CD14-positive monocyte (primary cell): ENCODE measurements at regions of chr5 and their contacts with region 1.

Region 1: GRCh38 chr5:127564002-127564769 is 46.7 kb downstream of the PRRC1 start:
- DNase-seq: peak; percentile 29 to 51 (median 51)
- H3K4me3 ChIP-seq: no peak overlapping the region
- H3K4me3 Mint-ChIP-seq: no peak overlapping the region
- H3K27ac ChIP-seq: no peak overlapping the region
- H3K27ac Mint-ChIP-seq: no peak overlapping the region
- H3K4me1 ChIP-seq: peaks cover 0 to 3% of the 10 kb centered on the region in 2 donors
- H3K4me1 Mint-ChIP-seq: peaks cover 25% of the 10 kb centered on the region
- H3K27me3 ChIP-seq: no peaks in the 10 kb centered on the region
- H3K27me3 Mint-ChIP-seq: peaks cover 0 to 1% (median 0%) of the 10 kb centered on the region in 3 donors
- CTCF ChIP-seq: peak; percentile 69

Region 2: DNA sequence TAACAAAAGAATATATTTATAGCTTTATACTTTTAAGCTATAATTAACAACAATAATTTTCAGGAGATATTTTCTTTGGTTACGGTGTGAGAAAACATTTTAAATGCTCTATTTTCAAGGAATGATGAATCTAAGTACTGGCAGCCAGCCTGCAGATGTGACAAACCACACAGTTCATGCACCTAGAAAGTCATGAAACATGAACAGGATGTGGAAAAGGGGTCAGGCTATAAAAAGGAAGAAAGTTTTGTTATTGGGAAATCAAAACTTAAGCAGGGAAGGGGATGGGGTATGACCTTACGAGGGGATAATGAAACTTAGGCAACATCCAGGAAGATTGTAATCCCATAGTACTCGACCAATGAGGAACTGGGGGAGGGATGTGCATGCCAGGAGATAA is 1649.7 kb before region 1 on chr5:
- intact Hi-C with region 1: no loop called
- DNase-seq: no peak
- H3K4me3 ChIP-seq: no peak overlapping the region
- H3K4me3 Mint-ChIP-seq: no peak overlapping the region
- H3K27ac ChIP-seq: no peak overlapping the region
- H3K27ac Mint-ChIP-seq: no peak overlapping the region
- H3K4me1 ChIP-seq: no peaks in the 10 kb centered on the region
- H3K4me1 Mint-ChIP-seq: no peaks in the 10 kb centered on the region
- H3K27me3 ChIP-seq: no peaks in the 10 kb centered on the region
- H3K27me3 Mint-ChIP-seq: no peaks in the 10 kb centered on the region
- CTCF ChIP-seq: no peak

Region 3: DNA sequence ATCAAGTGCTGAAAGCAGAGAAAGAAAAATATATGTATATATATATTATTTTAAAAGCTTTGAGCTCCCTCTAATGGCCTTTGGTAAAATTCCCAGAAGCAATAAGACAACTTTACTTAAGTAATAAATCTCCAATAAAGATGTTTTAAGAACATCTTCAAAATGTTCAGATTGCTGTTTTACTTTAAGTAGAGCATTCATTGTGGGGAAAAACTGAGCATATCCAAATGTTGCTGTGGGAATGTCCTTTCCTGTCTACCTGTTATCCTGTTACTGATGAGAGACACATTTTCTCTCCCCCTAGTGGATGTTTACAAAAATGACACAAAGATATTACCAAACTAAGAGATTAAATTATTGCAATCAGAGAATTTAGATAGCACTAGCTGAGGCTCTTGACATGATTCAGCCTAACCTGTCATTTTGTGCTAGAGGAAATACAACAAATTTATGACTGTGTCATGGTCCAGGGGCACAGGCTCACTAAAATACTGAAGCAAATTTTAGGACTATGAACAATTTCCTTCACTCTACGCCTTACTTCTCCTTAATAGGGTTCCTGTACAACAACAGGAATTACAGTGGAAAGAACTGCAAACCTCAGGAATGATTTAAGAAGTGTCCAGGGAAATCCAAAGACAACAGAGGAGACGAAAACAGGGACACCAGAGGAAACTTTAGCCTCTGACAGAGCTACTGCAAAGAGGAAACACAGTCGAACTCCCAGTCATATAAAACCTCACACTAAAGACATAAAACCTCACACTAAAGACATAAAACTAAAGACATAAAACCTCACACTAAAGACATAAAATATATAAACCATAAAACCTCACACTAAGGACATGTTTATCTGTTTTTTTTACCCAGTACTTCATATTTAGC is 71.1 kb before region 1 on chr5:
- intact Hi-C with region 1: no loop called
- DNase-seq: peak; percentile 2 to 18 (median 12)
- H3K4me3 ChIP-seq: no peak overlapping the region
- H3K4me3 Mint-ChIP-seq: no peak overlapping the region
- H3K27ac ChIP-seq: no peak overlapping the region
- H3K27ac Mint-ChIP-seq: no peak overlapping the region
- H3K4me1 ChIP-seq: no peaks in the 10 kb centered on the region
- H3K4me1 Mint-ChIP-seq: no peaks in the 10 kb centered on the region
- H3K27me3 ChIP-seq: peaks cover 0 to 2% of the 10 kb centered on the region in 2 donors
- H3K27me3 Mint-ChIP-seq: peaks cover 7 to 13% (median 10%) of the 10 kb centered on the region in 3 donors
- CTCF ChIP-seq: peak; percentile 97

Region 4: GRCh38 chr5:127586066-127586770 is 22.0 kb after region 1 on chr5:
- intact Hi-C with region 1: no loop called
- DNase-seq: no peak
- H3K4me3 ChIP-seq: no peak overlapping the region
- H3K4me3 Mint-ChIP-seq: no peak overlapping the region
- H3K27ac ChIP-seq: no peak overlapping the region
- H3K27ac Mint-ChIP-seq: no peak overlapping the region
- H3K4me1 ChIP-seq: no peaks in the 10 kb centered on the region
- H3K4me1 Mint-ChIP-seq: peaks cover 7% of the 10 kb centered on the region
- H3K27me3 ChIP-seq: no peaks in the 10 kb centered on the region
- H3K27me3 Mint-ChIP-seq: peaks cover 1 to 3% (median 2%) of the 10 kb centered on the region in 3 donors
- CTCF ChIP-seq: no peak

Region 5: DNA sequence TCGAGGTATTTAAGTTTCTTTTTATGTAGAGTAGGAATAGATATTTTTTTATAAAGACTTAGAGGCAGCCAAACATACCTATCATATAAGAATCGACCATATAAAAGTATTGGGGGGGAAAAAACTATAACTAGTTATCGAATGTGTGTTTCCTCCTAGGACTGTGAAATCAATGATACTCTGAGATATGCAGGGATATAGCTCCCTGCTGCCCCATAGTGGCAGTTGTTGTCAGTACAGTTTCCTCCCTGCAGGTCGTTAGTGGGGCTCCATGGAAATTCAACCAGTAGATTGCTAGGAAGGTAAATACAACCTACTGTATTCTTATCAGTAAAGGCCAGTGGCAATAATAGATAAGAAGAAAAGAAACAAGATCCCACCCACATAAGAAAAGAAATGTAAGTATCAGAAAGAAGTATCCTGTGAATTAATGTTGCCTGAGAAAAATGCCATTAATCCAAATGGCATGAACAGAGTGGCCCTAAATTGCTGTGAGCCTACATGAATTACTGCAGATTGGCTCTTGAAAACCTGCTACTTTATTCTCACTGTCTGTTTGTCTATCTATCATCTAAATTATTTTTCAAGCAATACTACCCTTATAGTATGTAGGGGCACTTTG is 1110.8 kb after region 1 on chr5:
- intact Hi-C with region 1: loop called in 1 of 2 experiments (anchors 10 kb)
- DNase-seq: peak; percentile 11 to 38 (median 20)
- H3K4me3 ChIP-seq: no peak overlapping the region
- H3K4me3 Mint-ChIP-seq: no peak overlapping the region
- H3K27ac ChIP-seq: no peak overlapping the region
- H3K27ac Mint-ChIP-seq: no peak overlapping the region
- H3K4me1 ChIP-seq: no peaks in the 10 kb centered on the region
- H3K4me1 Mint-ChIP-seq: no peaks in the 10 kb centered on the region
- H3K27me3 ChIP-seq: no peaks in the 10 kb centered on the region
- H3K27me3 Mint-ChIP-seq: peaks cover 2 to 8% (median 5%) of the 10 kb centered on the region in 3 donors
- CTCF ChIP-seq: peak; percentile 79